Left colon (tissue), 2 donors: ENCODE measurements at regions of chr12 and their contacts with region 1.

Region 1: DNA sequence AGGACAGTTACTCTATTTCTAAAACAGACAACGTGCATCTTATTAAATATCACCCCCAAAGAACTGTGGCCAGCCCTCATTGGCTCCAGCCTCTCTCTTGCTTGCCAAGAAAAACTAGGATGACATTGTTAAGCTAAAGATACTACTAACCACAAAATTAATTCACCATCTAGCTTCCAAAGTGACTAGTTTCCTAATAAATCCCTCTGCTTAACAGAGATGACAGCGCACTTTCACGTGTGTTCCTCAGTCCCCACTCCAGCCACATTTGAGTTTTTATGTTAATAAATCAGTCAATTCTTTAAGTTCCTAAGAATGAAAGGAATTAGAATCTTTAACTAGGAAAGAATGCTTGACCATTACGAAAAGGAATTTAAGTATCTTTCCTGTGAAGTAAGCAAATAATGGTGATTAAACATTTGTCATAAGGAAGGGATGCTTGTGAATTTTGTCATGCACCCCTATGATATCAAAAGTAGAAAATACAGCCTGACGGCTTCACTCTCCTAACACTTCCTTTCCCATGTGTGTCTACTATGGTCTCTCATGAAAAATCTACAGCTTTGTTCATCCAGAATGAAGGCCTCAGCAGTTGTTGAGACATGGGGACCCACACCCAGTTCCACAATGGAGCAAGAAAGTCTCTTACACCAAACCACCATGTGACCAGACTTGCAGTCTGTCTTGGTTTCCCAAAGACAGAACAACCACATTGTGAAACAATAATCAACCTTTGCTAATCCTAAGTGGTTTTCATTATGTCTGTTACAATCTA is 8.1 kb downstream of the CORO1C start:
- DNase-seq: no peak
- ATAC-seq: no peak

Region 2: GRCh38 chr12:108664338-108665258 is 58.6 kb before region 1 on chr12:
- intact Hi-C with region 1: loop called in 1 of 2 experiments (anchors 10 kb)
- DNase-seq: peak; percentile 77 to 79
- ATAC-seq: peak; percentile 95